AG04449 (cell line): ENCODE measurements at regions of chr10 and their contacts with region 1.

Region 1: GRCh38 chr10:126407846-126408245 is 19.6 kb upstream of the ADAM12 start:
- DNase-seq: no peak
- H3K4me3 ChIP-seq: no peak overlapping the region
- CTCF ChIP-seq: no peak

Region 2: GRCh38 chr10:126420567-126421300 is 12.9 kb after region 1 on chr10:
- CTCF ChIA-PET with region 1: interaction called, 11 read pairs
- POLR2A ChIA-PET with region 1: no interaction called
- DNase-seq: no peak
- H3K4me3 ChIP-seq: no peak overlapping the region
- CTCF ChIP-seq: no peak

Region 3: GRCh38 chr10:126431246-126431645 is 23.4 kb after region 1 on chr10:
- CTCF ChIA-PET with region 1: no interaction called
- POLR2A ChIA-PET with region 1: no interaction called
- DNase-seq: no peak
- H3K4me3 ChIP-seq: no peak overlapping the region
- CTCF ChIP-seq: no peak